ENCODE measurements at regions of chr18 and their contacts with region 1.

Region 1: GRCh38 chr18:24488824-24489493 is 28.5 kb downstream of the HRH4 start:
- DNase-seq: no peak
- H3K4me3 ChIP-seq: no peak overlapping the region
- H3K27ac ChIP-seq: no peak overlapping the region
- H3K27me3 ChIP-seq: no peaks in the 10 kb centered on the region
- CTCF ChIP-seq: peak; percentile 77 to 96 (median 89)

Region 2: DNA sequence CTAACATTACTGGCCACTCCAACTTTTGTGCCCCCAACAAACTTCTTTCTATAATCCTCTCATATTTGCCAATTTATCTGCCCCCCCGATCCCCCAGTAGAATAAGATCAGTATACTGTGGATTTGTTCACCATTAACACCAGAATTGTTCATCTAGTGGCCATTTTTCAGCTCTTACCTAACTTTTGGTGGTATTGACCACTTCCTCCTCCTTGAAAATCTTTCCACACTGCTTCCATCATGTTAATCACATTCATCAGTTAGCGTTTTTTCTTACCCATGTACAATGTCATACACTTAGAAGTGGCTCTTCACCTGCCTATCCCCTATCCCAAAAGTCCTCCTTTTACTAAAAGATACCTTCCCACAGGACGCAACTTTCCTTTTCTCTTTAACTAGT is 56.3 kb before region 1 on chr18:
- intact Hi-C with region 1: loop called in 1 of 2 experiments (anchors 10 kb)
- DNase-seq: no peak
- H3K4me3 ChIP-seq: no peak overlapping the region
- H3K27ac ChIP-seq: no peak overlapping the region
- H3K27me3 ChIP-seq: no peaks in the 10 kb centered on the region
- CTCF ChIP-seq: no peak